ENCODE measurements at regions of chr2 and their contacts with region 1.

Region 1: GRCh38 chr2:7026742-7027141 is 109.5 kb downstream of the RNF144A start:
- DNase-seq: no peak
- ATAC-seq: no peak
- H3K4me3 ChIP-seq: no peak overlapping the region
- H3K27ac ChIP-seq: peak overlapping the region in 2 of 4 donors; percentile 19 to 25
- H3K4me1 ChIP-seq: peaks cover 69% of the 10 kb centered on the region
- H3K27me3 ChIP-seq: no peaks in the 10 kb centered on the region
- CTCF ChIP-seq: no peak
- POLR2A ChIP-seq: no peak

Region 2: DNA sequence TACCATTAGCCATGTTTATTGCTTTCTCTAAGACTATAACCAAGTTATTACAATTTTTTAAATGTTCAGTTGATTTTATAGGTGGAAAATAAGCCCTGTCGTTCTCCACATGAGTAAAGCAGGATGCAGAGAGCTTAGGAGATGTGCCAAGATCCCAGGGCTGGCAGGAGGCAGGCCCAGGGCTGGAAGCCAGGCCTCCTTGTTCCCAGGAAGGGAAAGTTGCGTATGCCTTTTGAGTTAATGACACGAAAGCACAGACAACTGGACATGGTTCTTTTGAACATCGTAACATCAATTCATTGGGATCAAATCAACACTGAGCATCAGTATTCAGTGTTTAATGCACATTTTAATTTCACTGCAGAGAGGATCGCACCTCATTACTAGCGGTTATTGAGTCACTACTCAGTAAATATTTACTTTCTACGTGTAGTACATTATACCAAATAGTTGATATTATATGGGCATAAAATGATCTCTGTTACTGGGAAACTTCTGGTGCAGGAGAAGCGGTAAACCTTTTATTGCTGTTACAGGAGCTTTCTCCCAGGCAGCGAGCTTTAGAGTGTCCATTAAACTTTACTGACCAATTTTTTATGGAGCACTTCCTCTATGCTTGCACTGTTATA is 49.5 kb before region 1 on chr2:
- intact Hi-C with region 1: loop called (anchors 10 kb)
- DNase-seq: peak; percentile 78 to 88 (median 84)
- ATAC-seq: peak; percentile 80
- H3K4me3 ChIP-seq: no peak overlapping the region
- H3K27ac ChIP-seq: peak overlapping the region; percentile 69 to 77 (median 74)
- H3K4me1 ChIP-seq: peaks cover 42% of the 10 kb centered on the region
- H3K27me3 ChIP-seq: no peaks in the 10 kb centered on the region
- CTCF ChIP-seq: no peak
- POLR2A ChIP-seq: no peak